CD8-positive, alpha-beta T cell (primary cell): ENCODE measurements at regions of chr4 and their contacts with region 1.

Region 1: GRCh38 chr4:97153042-97153441 is 990.2 kb downstream of the STPG2 start:
- DNase-seq: peak in 1 of 9 experiments; percentile 2
- ATAC-seq: no peak
- H3K4me3 ChIP-seq: no peak overlapping the region
- H3K4me3 Mint-ChIP-seq: no peak overlapping the region
- H3K27ac ChIP-seq: no peak overlapping the region
- H3K27ac Mint-ChIP-seq: no peak overlapping the region
- H3K4me1 ChIP-seq: no peaks in the 10 kb centered on the region
- H3K4me1 Mint-ChIP-seq: no peaks in the 10 kb centered on the region
- H3K27me3 ChIP-seq: no peaks in the 10 kb centered on the region
- H3K27me3 Mint-ChIP-seq: no peaks in the 10 kb centered on the region
- CTCF ChIP-seq: no peak

Region 2: GRCh38 chr4:95155759-95156451 is 1997.1 kb before region 1 on chr4:
- CTCF ChIA-PET with region 1: no interaction called
- POLR2A ChIA-PET with region 1: no interaction called
- intact Hi-C with region 1: loop called (anchors 10 kb)
- DNase-seq: peak in 2 of 9 experiments; percentile 36 to 57
- ATAC-seq: peak; percentile 42
- H3K4me3 ChIP-seq: no peak overlapping the region
- H3K4me3 Mint-ChIP-seq: no peak overlapping the region
- H3K27ac ChIP-seq: no peak overlapping the region
- H3K27ac Mint-ChIP-seq: peak overlapping the region; percentile 3
- H3K4me1 ChIP-seq: peaks cover 14% of the 10 kb centered on the region
- H3K4me1 Mint-ChIP-seq: peaks cover 10% of the 10 kb centered on the region
- H3K27me3 ChIP-seq: no peaks in the 10 kb centered on the region
- H3K27me3 Mint-ChIP-seq: no peaks in the 10 kb centered on the region
- CTCF ChIP-seq: peak; percentile 57

Region 3: GRCh38 chr4:95165926-95166524 is 1987.0 kb before region 1 on chr4:
- CTCF ChIA-PET with region 1: no interaction called
- POLR2A ChIA-PET with region 1: no interaction called
- intact Hi-C with region 1: loop called in 1 of 2 experiments (anchors 10 kb)
- DNase-seq: peak in 3 of 9 experiments; percentile 15 to 71 (median 57)
- ATAC-seq: peak; percentile 56
- H3K4me3 ChIP-seq: no peak overlapping the region
- H3K4me3 Mint-ChIP-seq: no peak overlapping the region
- H3K27ac ChIP-seq: no peak overlapping the region
- H3K27ac Mint-ChIP-seq: no peak overlapping the region
- H3K4me1 ChIP-seq: peaks cover 5% of the 10 kb centered on the region
- H3K4me1 Mint-ChIP-seq: peaks cover 5% of the 10 kb centered on the region
- H3K27me3 ChIP-seq: no peaks in the 10 kb centered on the region
- H3K27me3 Mint-ChIP-seq: peaks cover 3% of the 10 kb centered on the region
- CTCF ChIP-seq: peak; percentile 72